Tibial artery (tissue), 4 donors: ENCODE measurements at regions of chr12 and their contacts with region 1.

Region 1: GRCh38 chr12:65169320-65170208 is at the start of gene LEMD3:
- DNase-seq: peak; percentile 93 to 94
- H3K4me3 ChIP-seq: peak within 1 kb of the TSS; percentile 69 to 88
- H3K27ac ChIP-seq: peak within 1 kb of the TSS; percentile 93 to 97
- H3K4me1 ChIP-seq: peaks cover 0 to 44% (median 35%) of the 10 kb centered on the region in 4 donors
- H3K27me3 ChIP-seq: peaks cover 0 to 2% of the 10 kb centered on the region in 2 donors
- CTCF ChIP-seq: no peak

Region 2: DNA sequence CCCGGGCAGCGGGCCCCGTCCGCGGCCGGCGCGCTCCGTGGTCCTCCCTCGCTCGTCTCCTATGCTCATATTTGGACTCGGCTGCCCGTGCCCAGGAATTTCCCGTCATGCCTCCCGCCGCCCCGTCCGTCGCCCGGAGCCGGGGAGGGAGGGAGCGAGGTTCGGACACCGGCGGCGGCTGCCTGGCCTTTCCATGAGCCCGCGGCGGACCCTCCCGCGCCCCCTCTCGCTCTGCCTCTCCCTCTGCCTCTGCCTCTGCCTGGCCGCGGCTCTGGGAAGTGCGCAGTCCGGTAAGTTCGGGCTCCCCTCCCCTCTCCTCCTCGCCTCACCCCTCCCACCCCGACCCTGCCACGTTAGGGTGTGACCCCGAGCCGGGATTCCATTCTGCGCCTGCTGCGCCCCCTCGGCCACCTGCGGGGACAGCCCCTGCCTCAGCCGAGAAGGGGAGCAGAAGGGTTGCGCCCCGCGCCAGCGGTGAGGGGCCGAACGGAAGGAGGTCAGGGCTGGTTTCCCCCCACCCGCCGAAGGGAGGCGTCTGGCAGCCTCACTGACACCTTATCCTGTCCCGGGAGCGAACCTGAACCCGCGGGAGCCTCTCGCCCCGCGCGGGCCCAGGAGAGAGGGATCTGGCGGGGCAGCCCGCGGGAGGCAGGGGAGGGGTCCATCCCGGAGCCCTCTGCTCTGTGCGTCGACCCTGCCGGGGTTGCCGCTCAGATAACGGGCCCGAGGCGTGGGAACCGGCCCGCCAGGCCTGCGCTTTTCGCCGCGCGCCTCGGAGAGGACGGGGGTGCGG is 109.2 kb after region 1 on chr12 and contains the start of gene MSRB3:
- intact Hi-C with region 1: loop called (anchors 10 kb)
- DNase-seq: peak; percentile 69 to 92
- H3K4me3 ChIP-seq: peak within 1 kb of the TSS; percentile 86 to 98
- H3K27ac ChIP-seq: peak within 1 kb of the TSS; percentile 97 to 100
- H3K4me1 ChIP-seq: peaks cover 0 to 55% (median 24%) of the 10 kb centered on the region in 4 donors
- H3K27me3 ChIP-seq: no peaks in the 10 kb centered on the region
- CTCF ChIP-seq: no peak

Region 3: GRCh38 chr12:65443038-65443437 is 273.5 kb after region 1 on chr12:
- intact Hi-C with region 1: no loop called
- DNase-seq: no peak
- H3K4me3 ChIP-seq: no peak overlapping the region
- H3K27ac ChIP-seq: no peak overlapping the region
- H3K4me1 ChIP-seq: peaks cover 0 to 29% (median 0%) of the 10 kb centered on the region in 4 donors
- H3K27me3 ChIP-seq: no peaks in the 10 kb centered on the region
- CTCF ChIP-seq: no peak